ENCODE measurements at regions of chr15 and their contacts with region 1.

Region 1: DNA sequence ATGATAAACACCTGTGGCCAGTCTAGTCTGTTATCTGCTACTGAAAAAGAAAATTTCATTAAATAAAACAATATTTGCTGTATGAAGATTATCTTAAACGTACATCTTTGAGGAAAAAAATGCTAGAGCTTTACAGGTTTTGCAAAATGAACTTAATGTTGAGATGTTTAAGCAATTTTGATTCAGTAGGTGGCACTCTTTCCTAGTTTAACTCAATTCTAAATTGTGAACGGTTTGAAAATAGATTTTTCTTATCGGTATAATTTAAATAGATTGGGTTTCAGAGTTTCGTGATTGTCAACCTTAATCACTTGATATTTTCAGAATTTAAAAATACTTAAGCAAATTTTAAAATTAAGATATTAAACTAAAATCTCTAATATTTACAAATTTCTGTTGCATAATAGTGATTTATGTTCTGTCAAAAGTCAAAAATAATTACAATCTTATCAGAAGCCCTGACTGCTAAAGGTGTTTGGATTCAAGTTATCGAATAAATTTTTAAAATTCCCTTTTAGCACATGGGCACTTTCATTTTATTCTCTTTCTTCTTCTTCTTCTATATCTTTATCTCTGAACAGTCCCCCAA is 7.0 kb upstream of the RNF111 start:
- DNase-seq: peak in 6 of 9 donors; percentile 30 to 57 (median 48)
- ATAC-seq: peak; percentile 62
- H3K4me3 ChIP-seq: no peak overlapping the region
- H3K4me3 Mint-ChIP-seq: peak overlapping the region in 3 of 10 donors; percentile 55 to 74 (median 60)
- H3K27ac ChIP-seq: no peak overlapping the region
- H3K27ac Mint-ChIP-seq: peak overlapping the region in 1 of 9 donors; percentile 85
- H3K4me1 ChIP-seq: peaks cover 19 to 20% of the 10 kb centered on the region in 2 donors
- H3K4me1 Mint-ChIP-seq: peaks cover 21 to 37% (median 27%) of the 10 kb centered on the region in 7 donors
- H3K27me3 ChIP-seq: no peaks in the 10 kb centered on the region
- H3K27me3 Mint-ChIP-seq: peaks cover 0 to 18% (median 0%) of the 10 kb centered on the region in 5 donors

Region 2: DNA sequence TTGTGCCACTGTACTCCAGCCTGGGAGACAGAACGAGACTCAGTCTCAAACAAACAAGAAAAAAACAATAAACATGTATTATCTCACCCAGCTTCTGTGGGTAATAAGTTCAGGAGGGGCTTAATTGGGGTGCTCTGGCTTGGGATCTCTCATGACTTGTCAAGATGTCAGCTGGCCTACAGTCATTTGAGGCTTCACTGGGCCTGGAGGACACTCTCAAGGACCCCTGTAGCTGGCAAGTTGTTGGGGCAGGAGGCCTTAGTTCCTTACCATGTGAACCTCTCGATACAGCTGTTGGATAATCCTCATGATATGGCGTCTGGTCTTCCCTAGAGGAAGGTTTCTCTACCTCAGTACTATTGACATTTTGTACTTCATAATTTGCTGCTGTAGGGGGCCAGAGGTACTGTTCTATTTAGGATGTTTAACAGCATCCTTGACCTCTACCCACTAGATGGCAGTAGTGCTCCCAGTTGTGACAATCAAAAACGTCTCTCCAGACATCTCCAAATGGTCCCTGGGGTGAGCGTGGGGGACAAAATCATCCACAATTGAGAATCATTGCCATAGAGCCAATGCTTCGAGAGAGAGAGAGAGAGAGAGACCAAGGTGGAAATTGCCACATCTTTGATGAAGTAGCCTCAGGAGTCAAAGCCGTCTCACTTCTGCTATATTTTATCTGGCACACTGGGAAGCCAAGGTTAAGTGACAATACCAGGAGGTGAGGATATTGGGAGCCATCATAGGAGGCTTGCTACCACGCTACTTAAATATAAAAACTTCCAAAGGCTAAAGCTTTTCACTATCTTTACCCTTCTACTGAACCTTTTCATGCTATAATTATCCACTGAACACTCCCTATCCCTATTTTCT is 23.1 kb before region 1 on chr15:
- CTCF ChIA-PET with region 1: no interaction called
- POLR2A ChIA-PET with region 1: interaction called, 3 read pairs
- intact Hi-C with region 1: loop called in 1 of 2 experiments (anchors 2 kb)
- DNase-seq: peak in 8 of 9 donors; percentile 37 to 69 (median 63)
- ATAC-seq: peak; percentile 99
- H3K4me3 ChIP-seq: no peak overlapping the region
- H3K4me3 Mint-ChIP-seq: peak overlapping the region in 1 of 10 donors; percentile 39
- H3K27ac ChIP-seq: no peak overlapping the region
- H3K27ac Mint-ChIP-seq: no peak overlapping the region
- H3K4me1 ChIP-seq: no peaks in the 10 kb centered on the region
- H3K4me1 Mint-ChIP-seq: peaks cover 0 to 14% (median 8%) of the 10 kb centered on the region in 7 donors
- H3K27me3 ChIP-seq: peaks cover 0 to 3% of the 10 kb centered on the region in 2 donors
- H3K27me3 Mint-ChIP-seq: peaks cover 0 to 11% (median 0%) of the 10 kb centered on the region in 5 donors

Region 3: GRCh38 chr15:59104912-59105732 is 124.7 kb after region 1 on chr15 and contains the start of gene CCNB2:
- CTCF ChIA-PET with region 1: interaction called, 3 read pairs
- POLR2A ChIA-PET with region 1: no interaction called
- intact Hi-C with region 1: loop called in 1 of 2 experiments (anchors 1 kb)
- DNase-seq: peak; percentile 63 to 91 (median 87)
- ATAC-seq: peak; percentile 100
- H3K4me3 ChIP-seq: peak within 1 kb of the TSS; percentile 77
- H3K4me3 Mint-ChIP-seq: peak within 1 kb of the TSS; percentile 89 to 100 (median 93)
- H3K27ac ChIP-seq: peak within 1 kb of the TSS; percentile 71
- H3K27ac Mint-ChIP-seq: peak within 1 kb of the TSS; percentile 94 to 100 (median 98)
- H3K4me1 ChIP-seq: peaks cover 7 to 11% of the 10 kb centered on the region in 2 donors
- H3K4me1 Mint-ChIP-seq: peaks cover 9 to 49% (median 13%) of the 10 kb centered on the region in 7 donors
- H3K27me3 ChIP-seq: no peaks in the 10 kb centered on the region
- H3K27me3 Mint-ChIP-seq: no peaks in the 10 kb centered on the region
- total RNA-seq, gene CCNB2: 0.27 to 52.2 (median 0.41) TPM

Region 4: DNA sequence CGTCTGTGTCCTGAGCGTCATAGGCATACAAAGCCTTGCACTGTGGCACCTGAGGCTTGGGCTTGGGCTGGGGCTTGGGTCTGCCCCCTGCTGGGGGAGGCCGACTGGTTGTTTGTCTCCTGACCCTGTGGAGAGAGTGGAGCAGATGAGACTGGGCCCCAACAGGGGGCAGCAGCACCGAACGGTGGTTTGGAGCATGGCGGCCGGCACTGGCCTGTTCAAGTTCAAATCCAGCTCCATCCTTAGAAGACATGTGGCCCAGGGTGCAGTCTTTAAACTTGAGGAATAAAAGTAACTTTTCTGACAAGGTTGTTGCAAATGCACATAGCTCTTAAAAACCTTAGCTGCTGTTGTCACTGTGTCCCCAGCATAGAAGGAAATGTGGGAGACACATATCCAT is 157.8 kb after region 1 on chr15:
- CTCF ChIA-PET with region 1: no interaction called
- POLR2A ChIA-PET with region 1: no interaction called
- intact Hi-C with region 1: loop called (anchors 1 to 2 kb)
- DNase-seq: peak; percentile 23 to 48 (median 38)
- ATAC-seq: peak; percentile 92
- H3K4me3 ChIP-seq: no peak overlapping the region
- H3K4me3 Mint-ChIP-seq: no peak overlapping the region
- H3K27ac ChIP-seq: no peak overlapping the region
- H3K27ac Mint-ChIP-seq: peak overlapping the region in 2 of 9 donors; percentile 0 to 34
- H3K4me1 ChIP-seq: no peaks in the 10 kb centered on the region
- H3K4me1 Mint-ChIP-seq: peaks cover 0 to 46% (median 5%) of the 10 kb centered on the region in 7 donors
- H3K27me3 ChIP-seq: no peaks in the 10 kb centered on the region
- H3K27me3 Mint-ChIP-seq: no peaks in the 10 kb centered on the region

Measured in naive thymus-derived CD4-positive, alpha-beta T cell (primary cell).